CD14-positive monocyte (primary cell): ENCODE measurements at regions of chr13 and their contacts with region 1.

Region 1: DNA sequence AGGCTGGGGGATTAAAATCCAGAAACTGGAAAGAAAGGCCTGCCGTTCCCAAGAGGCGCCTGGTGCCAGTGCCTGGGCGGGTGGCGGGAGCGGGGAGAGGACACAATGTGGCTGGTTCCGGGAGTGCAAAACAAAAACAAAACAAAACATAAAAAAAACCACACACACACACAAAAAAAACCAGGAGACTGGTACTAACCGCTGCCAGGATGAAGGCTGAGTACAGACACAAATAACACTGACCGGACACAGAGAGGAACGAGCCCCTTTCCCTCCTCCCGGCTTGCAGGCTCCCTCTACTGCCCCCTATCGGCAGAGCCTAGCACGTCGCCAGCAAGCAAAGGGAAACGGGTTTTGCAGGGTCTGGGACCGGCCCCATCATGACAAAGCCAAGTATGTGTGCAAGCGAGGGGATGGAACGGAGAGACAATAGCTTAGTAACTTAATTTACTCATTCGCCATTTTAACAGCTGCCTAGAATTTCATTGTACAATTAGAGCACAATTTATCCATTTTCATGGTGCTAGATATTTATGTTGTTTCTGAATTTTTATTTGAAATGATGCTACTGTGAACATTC is 17.9 kb upstream of the ZDHHC20 start:
- DNase-seq: peak; percentile 71 to 85 (median 78)
- H3K4me3 ChIP-seq: peak overlapping the region; percentile 47 to 75 (median 47)
- H3K4me3 Mint-ChIP-seq: peak overlapping the region; percentile 87 to 94
- H3K27ac ChIP-seq: peak overlapping the region in 1 of 2 donors; percentile 49
- H3K27ac Mint-ChIP-seq: peak overlapping the region in 6 of 7 donors; percentile 26 to 94 (median 90)
- H3K4me1 ChIP-seq: peaks cover 10 to 12% of the 10 kb centered on the region in 2 donors
- H3K4me1 Mint-ChIP-seq: peaks cover 12% of the 10 kb centered on the region
- H3K27me3 ChIP-seq: no peaks in the 10 kb centered on the region
- H3K27me3 Mint-ChIP-seq: peaks cover 3 to 9% (median 9%) of the 10 kb centered on the region in 3 donors
- CTCF ChIP-seq: peak; percentile 91

Region 2: DNA sequence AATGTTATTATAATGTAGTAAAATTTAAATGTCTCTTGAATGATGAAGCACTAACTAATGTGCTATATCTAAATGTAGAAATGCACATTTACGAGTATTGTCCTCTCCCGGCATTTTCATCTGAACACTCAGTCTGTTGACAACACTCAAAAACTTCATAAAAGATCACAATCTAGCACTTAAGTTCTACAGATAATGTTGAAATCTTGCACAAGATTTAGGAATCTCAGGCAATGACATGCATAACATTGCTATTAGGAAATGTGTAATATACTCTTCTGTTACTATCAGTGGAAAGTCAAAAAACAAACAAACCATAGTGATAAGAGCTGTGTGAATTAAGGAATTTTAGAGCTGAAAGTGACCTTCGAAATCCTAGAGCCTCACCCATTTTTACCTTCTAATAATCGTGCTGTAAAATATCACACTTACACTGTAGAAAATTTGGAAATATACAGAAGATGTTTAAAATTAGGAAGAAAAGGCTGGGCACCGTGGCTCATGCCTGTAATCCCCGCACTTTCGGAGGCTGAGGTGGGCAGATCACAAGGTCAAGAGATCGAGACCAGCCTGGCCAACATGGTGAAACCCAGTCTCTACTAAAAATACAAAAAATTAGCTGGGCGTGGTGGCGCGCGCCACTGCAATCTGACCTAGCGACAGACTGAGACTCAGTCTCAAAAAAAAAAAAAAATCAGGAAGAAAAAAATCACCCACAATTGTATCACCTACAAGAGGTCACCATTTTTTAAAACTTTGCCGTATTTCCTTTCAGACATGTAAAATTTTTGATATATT is 536.7 kb before region 1 on chr13:
- intact Hi-C with region 1: loop called (anchors 5 to 10 kb)
- DNase-seq: no peak
- H3K4me3 ChIP-seq: no peak overlapping the region
- H3K4me3 Mint-ChIP-seq: no peak overlapping the region
- H3K27ac ChIP-seq: no peak overlapping the region
- H3K27ac Mint-ChIP-seq: no peak overlapping the region
- H3K4me1 ChIP-seq: peaks cover 12 to 13% of the 10 kb centered on the region in 2 donors
- H3K4me1 Mint-ChIP-seq: peaks cover 13% of the 10 kb centered on the region
- H3K27me3 ChIP-seq: no peaks in the 10 kb centered on the region
- H3K27me3 Mint-ChIP-seq: peaks cover 0 to 7% (median 5%) of the 10 kb centered on the region in 3 donors
- CTCF ChIP-seq: no peak

Region 3: GRCh38 chr13:20945952-20946383 is 531.0 kb before region 1 on chr13:
- intact Hi-C with region 1: loop called (anchors 5 to 10 kb)
- DNase-seq: peak; percentile 38 to 55 (median 55)
- H3K4me3 ChIP-seq: peak overlapping the region; percentile 10 to 66 (median 35)
- H3K4me3 Mint-ChIP-seq: peak overlapping the region; percentile 73 to 88
- H3K27ac ChIP-seq: no peak overlapping the region
- H3K27ac Mint-ChIP-seq: peak overlapping the region in 5 of 7 donors; percentile 15 to 81 (median 72)
- H3K4me1 ChIP-seq: peaks cover 20 to 22% of the 10 kb centered on the region in 2 donors
- H3K4me1 Mint-ChIP-seq: peaks cover 30% of the 10 kb centered on the region
- H3K27me3 ChIP-seq: peaks cover 3 to 7% of the 10 kb centered on the region in 2 donors
- H3K27me3 Mint-ChIP-seq: peaks cover 7 to 29% (median 19%) of the 10 kb centered on the region in 3 donors
- CTCF ChIP-seq: no peak

Region 4: GRCh38 chr13:21111546-21111945 is 365.4 kb before region 1 on chr13:
- intact Hi-C with region 1: loop called (anchors 2 to 5 kb)
- DNase-seq: no peak
- H3K4me3 ChIP-seq: no peak overlapping the region
- H3K4me3 Mint-ChIP-seq: no peak overlapping the region
- H3K27ac ChIP-seq: no peak overlapping the region
- H3K27ac Mint-ChIP-seq: no peak overlapping the region
- H3K4me1 ChIP-seq: no peaks in the 10 kb centered on the region
- H3K4me1 Mint-ChIP-seq: peaks cover 2% of the 10 kb centered on the region
- H3K27me3 ChIP-seq: no peaks in the 10 kb centered on the region
- H3K27me3 Mint-ChIP-seq: peaks cover 0 to 2% (median 1%) of the 10 kb centered on the region in 3 donors
- CTCF ChIP-seq: no peak

Region 5: DNA sequence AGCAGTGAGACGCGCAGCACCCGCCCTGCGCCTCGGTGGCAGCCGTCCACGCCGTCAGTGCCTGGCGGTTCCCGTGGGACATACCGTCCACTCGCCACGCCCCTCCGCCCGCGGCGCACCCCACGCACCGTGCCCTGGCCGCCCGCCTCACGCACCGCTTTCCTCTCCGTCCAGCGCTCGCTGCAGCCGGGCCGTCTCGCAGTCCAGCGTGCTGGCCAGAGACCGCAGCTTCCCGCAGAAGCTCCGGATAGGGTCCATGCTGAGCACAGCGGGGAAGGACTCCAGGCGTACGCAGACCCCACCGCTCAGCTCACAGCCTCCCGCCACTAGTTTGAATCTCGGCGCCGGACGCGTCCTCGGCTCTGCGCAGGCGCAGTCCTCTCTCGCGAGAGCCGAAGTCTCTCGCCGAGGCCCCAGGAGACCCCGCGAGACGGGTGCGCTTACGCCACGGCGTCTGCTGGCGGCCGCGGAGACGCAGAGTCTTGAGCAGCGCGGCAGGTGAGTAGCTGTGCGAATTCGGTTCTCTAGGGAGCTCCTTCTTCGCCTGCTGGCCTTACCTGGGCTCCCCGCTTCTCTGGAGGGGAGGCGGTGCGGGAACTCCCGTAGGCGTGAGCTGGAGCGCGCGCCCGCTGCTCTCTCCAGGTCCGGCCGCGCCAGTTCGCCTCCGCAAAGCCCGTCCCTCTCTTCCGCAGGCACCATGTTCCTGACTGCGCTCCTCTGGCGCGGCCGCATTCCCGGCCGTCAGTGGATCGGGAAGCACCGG is 300.6 kb before region 1 on chr13 and contains the starts of genes MRPL57 and SKA3:
- intact Hi-C with region 1: loop called in 1 of 2 experiments (anchors 10 kb)
- DNase-seq: peak; percentile 89 to 91 (median 90)
- H3K4me3 ChIP-seq: peak within 1 kb of the TSS; percentile 92 to 98 (median 95)
- H3K4me3 Mint-ChIP-seq: peak within 1 kb of the TSS; percentile 98
- H3K27ac ChIP-seq: peak within 1 kb of the TSS; percentile 92 to 93
- H3K27ac Mint-ChIP-seq: peak within 1 kb of the TSS; percentile 86 to 98 (median 95)
- H3K4me1 ChIP-seq: peaks cover 11 to 18% of the 10 kb centered on the region in 2 donors
- H3K4me1 Mint-ChIP-seq: peaks cover 17% of the 10 kb centered on the region
- H3K27me3 ChIP-seq: no peaks in the 10 kb centered on the region
- H3K27me3 Mint-ChIP-seq: no peaks in the 10 kb centered on the region
- CTCF ChIP-seq: no peak
- polyA plus RNA-seq, gene MRPL57: 6.8 to 52.3 (median 41.1) TPM
- polyA plus RNA-seq, gene SKA3: 0.12 to 2.5 (median 0.49) TPM

Region 6: DNA sequence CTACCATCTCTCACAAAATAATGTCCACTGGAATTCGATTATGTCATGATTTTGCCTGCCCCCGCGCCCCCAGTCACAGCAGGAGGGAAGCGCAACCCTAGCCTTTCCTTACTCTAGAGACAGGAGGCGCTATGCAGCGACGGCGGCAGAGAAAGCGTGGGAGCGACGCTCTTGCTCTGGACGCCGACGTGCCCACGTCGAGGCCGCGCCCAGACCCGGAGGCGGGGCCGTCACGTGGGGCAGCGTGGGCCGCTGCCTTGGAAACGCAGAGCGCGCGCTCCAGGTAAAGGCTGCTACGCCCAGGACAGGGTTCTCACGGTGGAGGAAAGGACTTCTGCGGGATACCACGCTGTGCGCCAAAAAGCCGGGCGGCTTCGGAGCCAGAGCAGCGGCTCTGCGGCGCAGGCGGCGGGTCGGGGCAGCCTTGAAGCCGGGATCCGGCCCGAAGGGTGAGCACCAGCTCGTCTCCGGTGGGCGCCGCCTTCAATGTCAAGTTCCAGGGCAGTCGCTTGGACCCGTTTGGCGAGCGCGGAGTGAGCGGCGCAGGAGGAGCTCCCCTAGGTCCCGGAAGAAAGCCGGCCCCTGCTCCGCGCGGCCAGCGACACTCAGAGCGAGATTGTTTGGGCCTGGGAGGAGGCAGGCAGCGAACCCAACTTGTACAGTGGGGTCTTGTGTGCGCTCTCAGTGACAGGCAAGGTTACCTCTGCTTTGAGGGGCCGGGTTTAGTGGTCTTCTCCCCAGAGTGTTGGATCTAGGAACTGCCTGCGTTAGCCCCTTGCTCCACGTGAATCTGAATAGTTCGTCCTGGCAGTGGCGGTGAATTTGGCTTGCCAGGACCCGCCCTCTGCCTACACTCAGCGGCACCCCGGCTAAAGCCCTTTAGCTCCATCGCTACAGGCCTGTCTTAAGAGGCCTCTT is 178.8 kb before region 1 on chr13:
- intact Hi-C with region 1: loop called (anchors 2 to 5 kb)
- DNase-seq: peak; percentile 82 to 85 (median 84)
- H3K4me3 ChIP-seq: peak overlapping the region; percentile 60 to 97 (median 78)
- H3K4me3 Mint-ChIP-seq: peak overlapping the region; percentile 90 to 92
- H3K27ac ChIP-seq: peak overlapping the region in 1 of 2 donors; percentile 51
- H3K27ac Mint-ChIP-seq: peak overlapping the region; percentile 23 to 85 (median 76)
- H3K4me1 ChIP-seq: peaks cover 16 to 22% of the 10 kb centered on the region in 2 donors
- H3K4me1 Mint-ChIP-seq: peaks cover 19% of the 10 kb centered on the region
- H3K27me3 ChIP-seq: no peaks in the 10 kb centered on the region
- H3K27me3 Mint-ChIP-seq: peaks cover 0 to 4% (median 0%) of the 10 kb centered on the region in 3 donors
- CTCF ChIP-seq: peak; percentile 91